CD8-positive, alpha-beta memory T cell (primary cell): ENCODE measurements at regions of chr10 and their contacts with region 1.

Region 1: DNA sequence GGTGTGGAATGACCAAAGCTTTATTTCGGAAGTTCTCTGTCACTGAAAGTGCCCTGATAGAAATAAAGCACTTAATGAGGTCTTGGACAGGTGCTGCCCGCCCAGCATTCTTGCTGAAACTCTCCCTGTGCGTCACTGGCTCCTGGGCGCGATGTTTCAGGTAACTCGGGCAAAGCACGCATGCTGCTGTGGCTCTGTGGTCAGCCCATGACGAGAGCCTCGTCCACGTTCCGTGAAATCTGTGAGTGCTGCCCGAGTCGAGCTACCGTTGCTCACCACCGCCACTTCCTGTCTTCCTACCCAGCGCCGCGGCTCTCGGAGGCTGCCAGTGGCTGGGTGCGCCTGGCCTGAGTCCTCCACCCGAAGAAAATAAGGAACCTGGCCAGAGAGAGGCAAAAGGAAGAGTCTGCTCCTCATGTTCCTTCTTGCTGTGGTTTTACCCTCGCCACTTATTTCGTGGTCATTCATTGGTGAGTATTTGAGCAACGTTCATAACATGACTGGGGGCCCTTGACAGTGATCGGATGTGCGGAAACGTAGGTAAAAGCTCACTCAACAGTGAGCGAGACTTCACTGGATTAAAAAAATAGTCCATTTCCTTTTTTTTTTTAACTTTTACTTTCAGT is 95.5 kb downstream of the MAP3K8 start:
- DNase-seq: peak; percentile 71 to 92 (median 84)
- H3K4me3 ChIP-seq: peak overlapping the region; percentile 81
- H3K4me3 Mint-ChIP-seq: peak overlapping the region; percentile 83 to 92 (median 89)
- H3K27ac ChIP-seq: peak overlapping the region; percentile 91
- H3K27ac Mint-ChIP-seq: peak overlapping the region; percentile 94 to 100 (median 98)
- H3K4me1 ChIP-seq: peaks cover 71% of the 10 kb centered on the region
- H3K4me1 Mint-ChIP-seq: peaks cover 73 to 89% (median 77%) of the 10 kb centered on the region in 3 donors
- H3K27me3 ChIP-seq: no peaks in the 10 kb centered on the region
- H3K27me3 Mint-ChIP-seq: no peaks in the 10 kb centered on the region

Region 2: GRCh38 chr10:30420266-30420665 is 109.2 kb before region 1 on chr10:
- CTCF ChIA-PET with region 1: interaction called, 21 read pairs
- POLR2A ChIA-PET with region 1: interaction called, 7 read pairs
- DNase-seq: no peak
- H3K4me3 ChIP-seq: no peak overlapping the region
- H3K4me3 Mint-ChIP-seq: no peak overlapping the region
- H3K27ac ChIP-seq: no peak overlapping the region
- H3K27ac Mint-ChIP-seq: peak overlapping the region in 2 of 8 donors; percentile 38 to 65
- H3K4me1 ChIP-seq: peaks cover 10% of the 10 kb centered on the region
- H3K4me1 Mint-ChIP-seq: peaks cover 18 to 22% (median 18%) of the 10 kb centered on the region in 3 donors
- H3K27me3 ChIP-seq: no peaks in the 10 kb centered on the region
- H3K27me3 Mint-ChIP-seq: no peaks in the 10 kb centered on the region

Region 3: DNA sequence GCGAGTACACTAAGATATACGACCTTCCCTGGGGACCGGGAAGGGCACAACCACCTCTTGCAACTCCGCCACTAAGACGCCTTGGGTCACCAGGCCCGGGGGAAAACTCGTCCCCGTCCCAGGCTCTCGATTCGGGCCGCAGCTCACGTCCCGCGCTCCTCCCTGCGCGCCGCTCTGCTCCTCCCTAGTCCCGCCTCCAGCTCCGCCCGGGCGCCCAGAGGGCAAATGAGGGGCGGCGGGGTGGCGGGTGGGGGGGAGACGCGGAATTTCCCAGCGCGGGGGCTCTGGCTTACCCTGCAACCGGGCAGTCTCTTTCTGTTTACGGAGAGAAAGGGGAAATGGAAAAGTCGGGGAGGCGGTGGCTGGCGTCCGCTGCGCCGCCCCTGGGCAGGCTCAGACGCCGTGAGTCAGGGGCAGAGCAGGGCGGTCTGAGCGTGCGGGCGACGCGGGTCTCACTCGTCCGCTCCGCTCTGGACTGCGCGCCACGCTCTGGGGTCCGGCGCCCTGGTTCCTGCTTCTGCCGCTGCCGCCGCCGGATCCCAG is 95.7 kb before region 1 on chr10 and contains the start of gene MAP3K8:
- CTCF ChIA-PET with region 1: interaction called, 13 read pairs
- POLR2A ChIA-PET with region 1: interaction called, 24 read pairs
- DNase-seq: peak; percentile 73 to 87 (median 85)
- H3K4me3 ChIP-seq: peak within 1 kb of the TSS; percentile 61
- H3K4me3 Mint-ChIP-seq: peak within 1 kb of the TSS; percentile 87 to 98 (median 92)
- H3K27ac ChIP-seq: peak within 1 kb of the TSS; percentile 88
- H3K27ac Mint-ChIP-seq: peak within 1 kb of the TSS; percentile 86 to 99 (median 92)
- H3K4me1 ChIP-seq: peaks cover 40% of the 10 kb centered on the region
- H3K4me1 Mint-ChIP-seq: peaks cover 50 to 55% (median 51%) of the 10 kb centered on the region in 3 donors
- H3K27me3 ChIP-seq: no peaks in the 10 kb centered on the region
- H3K27me3 Mint-ChIP-seq: peaks cover 0 to 6% of the 10 kb centered on the region in 2 donors
- total RNA-seq, gene MAP3K8: 40.3 to 42.6 TPM

Region 4: DNA sequence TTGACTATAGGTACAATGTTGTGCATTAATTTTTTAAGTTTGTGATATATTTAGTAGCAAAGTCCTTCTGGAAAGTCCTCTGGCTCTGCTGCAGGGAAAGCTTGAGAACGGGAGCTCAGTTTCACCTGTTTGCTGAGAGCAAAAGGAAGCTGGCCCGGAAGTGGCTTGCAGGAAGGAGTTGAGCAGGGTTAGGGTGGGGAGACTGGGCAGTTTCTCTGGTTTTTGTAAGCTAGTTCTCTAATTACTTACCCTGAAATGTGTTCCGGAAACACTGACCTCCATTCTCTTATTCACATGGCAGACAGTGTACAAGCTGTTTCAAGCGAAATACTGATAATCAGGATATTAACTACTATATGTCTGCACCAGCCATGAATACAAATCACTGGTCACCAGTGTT is 73.2 kb before region 1 on chr10:
- CTCF ChIA-PET with region 1: interaction called, 5 read pairs
- POLR2A ChIA-PET with region 1: interaction called, 12 read pairs
- DNase-seq: peak in 4 of 5 donors; percentile 21 to 56 (median 27)
- H3K4me3 ChIP-seq: peak overlapping the region; percentile 10
- H3K4me3 Mint-ChIP-seq: peak overlapping the region; percentile 28 to 84 (median 75)
- H3K27ac ChIP-seq: no peak overlapping the region
- H3K27ac Mint-ChIP-seq: peak overlapping the region; percentile 66 to 94 (median 88)
- H3K4me1 ChIP-seq: peaks cover 41% of the 10 kb centered on the region
- H3K4me1 Mint-ChIP-seq: peaks cover 33 to 52% (median 39%) of the 10 kb centered on the region in 3 donors
- H3K27me3 ChIP-seq: no peaks in the 10 kb centered on the region
- H3K27me3 Mint-ChIP-seq: no peaks in the 10 kb centered on the region

Region 5: GRCh38 chr10:30493609-30494530 is 35.6 kb before region 1 on chr10:
- CTCF ChIA-PET with region 1: interaction called, 22 read pairs
- POLR2A ChIA-PET with region 1: interaction called, 5 read pairs
- DNase-seq: peak in 1 of 5 donors; percentile 47
- H3K4me3 ChIP-seq: no peak overlapping the region
- H3K4me3 Mint-ChIP-seq: peak overlapping the region in 2 of 7 donors; percentile 18 to 59
- H3K27ac ChIP-seq: peak overlapping the region; percentile 17
- H3K27ac Mint-ChIP-seq: peak overlapping the region; percentile 17 to 95 (median 73)
- H3K4me1 ChIP-seq: peaks cover 67% of the 10 kb centered on the region
- H3K4me1 Mint-ChIP-seq: peaks cover 77 to 95% (median 83%) of the 10 kb centered on the region in 3 donors
- H3K27me3 ChIP-seq: no peaks in the 10 kb centered on the region
- H3K27me3 Mint-ChIP-seq: peaks cover 0 to 4% of the 10 kb centered on the region in 2 donors